Breast epithelium (tissue), 4 donors: ENCODE measurements at regions of chr6 and their contacts with region 1.

Region 1: DNA sequence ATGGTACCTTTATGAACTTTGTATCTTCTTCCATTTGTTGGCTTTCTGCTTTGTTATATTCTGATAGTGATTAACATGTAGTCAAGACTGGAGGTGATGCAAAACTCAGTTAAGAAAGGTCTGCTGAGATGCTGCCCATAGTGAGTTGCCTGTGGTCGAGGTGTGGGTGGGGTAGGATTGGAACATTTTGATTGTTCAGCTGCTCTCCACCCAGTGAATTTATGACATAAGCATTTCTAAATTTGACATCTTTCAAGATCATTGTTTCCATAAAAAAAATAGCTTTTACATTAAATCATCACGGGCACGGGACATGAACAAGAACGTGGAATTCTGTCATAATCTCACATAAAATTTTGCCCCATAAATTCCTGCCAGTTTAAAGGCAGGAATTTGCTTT is 146.6 kb upstream of the POU3F2 start:
- DNase-seq: no peak
- H3K4me3 ChIP-seq: no peak overlapping the region
- H3K27ac ChIP-seq: no peak overlapping the region
- H3K4me1 ChIP-seq: no peaks in the 10 kb centered on the region
- H3K27me3 ChIP-seq: no peaks in the 10 kb centered on the region
- CTCF ChIP-seq: no peak
- POLR2A ChIP-seq: no peak

Region 2: GRCh38 chr6:98672681-98673475 is 14.9 kb before region 1 on chr6:
- intact Hi-C with region 1: loop called (anchors 1 kb)
- DNase-seq: no peak
- H3K4me3 ChIP-seq: no peak overlapping the region
- H3K27ac ChIP-seq: peak overlapping the region; percentile 21 to 38
- H3K4me1 ChIP-seq: no peaks in the 10 kb centered on the region
- H3K27me3 ChIP-seq: no peaks in the 10 kb centered on the region
- CTCF ChIP-seq: no peak
- POLR2A ChIP-seq: no peak

Region 3: GRCh38 chr6:99297415-99297814 is 609.7 kb after region 1 on chr6:
- intact Hi-C with region 1: no loop called
- DNase-seq: no peak
- H3K4me3 ChIP-seq: no peak overlapping the region
- H3K27ac ChIP-seq: no peak overlapping the region
- H3K4me1 ChIP-seq: no peaks in the 10 kb centered on the region
- H3K27me3 ChIP-seq: no peaks in the 10 kb centered on the region
- CTCF ChIP-seq: no peak
- POLR2A ChIP-seq: no peak